ENCODE measurements at regions of chr9 and their contacts with region 1.

Region 1: GRCh38 chr9:30089428-30089827 is 2295.0 kb upstream of the ACO1 start:
- DNase-seq: no peak
- ATAC-seq: no peak
- H3K4me3 ChIP-seq: no peak overlapping the region
- H3K27ac ChIP-seq: no peak overlapping the region
- H3K4me1 ChIP-seq: no peaks in the 10 kb centered on the region
- H3K27me3 ChIP-seq: no peaks in the 10 kb centered on the region
- CTCF ChIP-seq: no peak

Region 2: GRCh38 chr9:29939559-29939958 is 149.9 kb before region 1 on chr9:
- intact Hi-C with region 1: no loop called
- DNase-seq: no peak
- ATAC-seq: no peak
- H3K4me3 ChIP-seq: no peak overlapping the region
- H3K27ac ChIP-seq: no peak overlapping the region
- H3K4me1 ChIP-seq: no peaks in the 10 kb centered on the region
- H3K27me3 ChIP-seq: no peaks in the 10 kb centered on the region
- CTCF ChIP-seq: no peak

Region 3: GRCh38 chr9:30048396-30048795 is 41.0 kb before region 1 on chr9:
- intact Hi-C with region 1: no loop called
- DNase-seq: no peak
- ATAC-seq: no peak
- H3K4me3 ChIP-seq: no peak overlapping the region
- H3K27ac ChIP-seq: no peak overlapping the region
- H3K4me1 ChIP-seq: no peaks in the 10 kb centered on the region
- H3K27me3 ChIP-seq: no peaks in the 10 kb centered on the region
- CTCF ChIP-seq: no peak

Region 4: DNA sequence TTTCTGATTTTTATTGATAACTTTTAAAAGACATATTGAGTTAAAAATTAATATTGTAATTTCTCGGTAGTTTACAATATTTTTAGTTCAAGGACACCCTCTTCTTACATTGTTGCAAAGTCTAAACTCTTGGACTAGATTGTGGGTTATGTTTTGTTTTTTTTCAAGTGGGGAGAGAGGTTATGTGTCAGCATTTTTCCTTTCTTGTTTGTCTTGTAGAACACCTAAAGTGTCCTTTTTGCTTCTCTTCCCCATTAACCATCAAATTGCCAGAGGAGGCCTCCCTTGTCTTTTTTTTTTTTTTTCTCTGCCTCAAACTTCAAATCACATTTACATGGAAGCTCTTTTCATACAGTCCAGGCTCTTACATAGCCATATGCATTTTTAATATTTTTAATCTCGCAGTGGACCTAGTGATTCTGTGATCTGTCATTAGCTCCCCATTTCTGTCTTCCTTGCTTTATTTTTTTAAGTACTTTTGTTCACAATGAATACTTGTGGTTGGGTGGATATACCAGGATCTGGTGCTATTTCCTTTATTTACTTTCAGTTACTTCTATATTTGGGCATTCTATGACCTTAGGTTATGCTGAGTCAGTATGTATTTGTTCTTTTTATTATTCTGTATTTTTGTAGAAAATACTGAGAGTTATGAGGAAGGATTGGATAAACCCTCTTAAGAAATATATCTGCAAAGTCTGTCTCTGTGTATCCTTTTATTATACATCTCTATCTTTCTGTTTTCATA is 14.4 kb after region 1 on chr9:
- intact Hi-C with region 1: loop called in 1 of 2 experiments (anchors 1 kb)
- DNase-seq: no peak
- ATAC-seq: no peak
- H3K4me3 ChIP-seq: no peak overlapping the region
- H3K27ac ChIP-seq: no peak overlapping the region
- H3K4me1 ChIP-seq: no peaks in the 10 kb centered on the region
- H3K27me3 ChIP-seq: no peaks in the 10 kb centered on the region
- CTCF ChIP-seq: no peak